ENCODE measurements at regions of chr2 and their contacts with region 1.

Region 1: DNA sequence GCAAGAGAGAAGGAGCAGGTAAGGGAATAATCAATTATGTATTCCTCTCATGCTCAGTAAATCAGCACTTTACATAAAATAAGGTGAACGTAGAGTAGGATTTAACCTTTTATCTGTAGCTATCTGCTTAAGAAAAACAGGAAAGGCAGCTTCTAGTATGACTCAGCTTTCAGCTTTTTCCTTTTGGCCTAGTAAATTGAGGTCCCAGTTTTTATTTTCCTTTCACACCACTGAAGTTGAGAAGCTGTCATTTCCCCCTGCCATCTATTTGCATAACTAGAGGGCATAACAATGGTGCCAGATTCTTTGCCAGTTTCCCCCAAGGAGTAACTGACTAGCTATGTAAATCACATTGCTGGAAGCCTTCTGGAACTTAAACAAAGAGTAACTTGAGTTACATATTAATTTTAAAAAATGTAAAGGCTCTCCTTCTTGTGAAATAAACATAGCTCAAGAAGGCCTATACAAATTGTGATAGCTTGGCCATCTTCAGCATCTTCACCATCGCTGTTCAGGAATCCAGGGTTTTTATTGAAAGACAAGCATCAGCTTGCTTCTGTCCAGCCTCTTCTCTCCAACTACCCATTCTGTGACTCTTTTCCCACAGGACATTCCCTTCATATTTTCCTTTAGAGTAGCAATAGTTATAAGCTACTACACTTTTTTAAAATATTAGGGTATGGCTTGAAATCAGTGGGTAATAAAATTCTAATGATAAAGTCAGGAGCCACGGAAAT is 97.0 kb downstream of the KYNU start:
- DNase-seq: no peak
- ATAC-seq: no peak
- H3K4me3 ChIP-seq: no peak overlapping the region
- H3K4me3 Mint-ChIP-seq: no peak overlapping the region
- H3K27ac ChIP-seq: no peak overlapping the region
- H3K27ac Mint-ChIP-seq: no peak overlapping the region
- H3K4me1 ChIP-seq: no peaks in the 10 kb centered on the region
- H3K4me1 Mint-ChIP-seq: no peaks in the 10 kb centered on the region
- H3K27me3 ChIP-seq: no peaks in the 10 kb centered on the region
- H3K27me3 Mint-ChIP-seq: no peaks in the 10 kb centered on the region
- CTCF ChIP-seq: no peak

Region 2: GRCh38 chr2:142989273-142990204 is 15.1 kb after region 1 on chr2:
- CTCF ChIA-PET with region 1: interaction called, 16 read pairs
- POLR2A ChIA-PET with region 1: interaction called, 3 read pairs
- intact Hi-C with region 1: no loop called
- DNase-seq: peak in 2 of 9 experiments; percentile 7 to 30
- ATAC-seq: no peak
- H3K4me3 ChIP-seq: no peak overlapping the region
- H3K4me3 Mint-ChIP-seq: no peak overlapping the region
- H3K27ac ChIP-seq: no peak overlapping the region
- H3K27ac Mint-ChIP-seq: no peak overlapping the region
- H3K4me1 ChIP-seq: no peaks in the 10 kb centered on the region
- H3K4me1 Mint-ChIP-seq: peaks cover 2% of the 10 kb centered on the region
- H3K27me3 ChIP-seq: peaks cover 0 to 2% of the 10 kb centered on the region in 2 experiments
- H3K27me3 Mint-ChIP-seq: peaks cover 4% of the 10 kb centered on the region
- CTCF ChIP-seq: peak; percentile 60

Measured in CD8-positive, alpha-beta T cell (primary cell).